ENCODE measurements at regions of chr4 and their contacts with region 1.

Region 1: GRCh38 chr4:68673143-68673542 is 2.7 kb upstream of the UGT2B15 start:
- DNase-seq: no peak
- ATAC-seq: no peak

Region 2: GRCh38 chr4:68498413-68499007 is 174.6 kb before region 1 on chr4:
- intact Hi-C with region 1: loop called (anchors 5 kb)
- DNase-seq: no peak
- ATAC-seq: peak; percentile 77

Region 3: GRCh38 chr4:68717999-68718398 is 44.9 kb after region 1 on chr4:
- intact Hi-C with region 1: no loop called
- DNase-seq: no peak
- ATAC-seq: no peak

Measured in Right ventricle myocardium superior (tissue), 1 donor.